Naive thymus-derived CD4-positive, alpha-beta T cell (primary cell): ENCODE measurements at regions of chr1 and their contacts with region 1.

Region 1: DNA sequence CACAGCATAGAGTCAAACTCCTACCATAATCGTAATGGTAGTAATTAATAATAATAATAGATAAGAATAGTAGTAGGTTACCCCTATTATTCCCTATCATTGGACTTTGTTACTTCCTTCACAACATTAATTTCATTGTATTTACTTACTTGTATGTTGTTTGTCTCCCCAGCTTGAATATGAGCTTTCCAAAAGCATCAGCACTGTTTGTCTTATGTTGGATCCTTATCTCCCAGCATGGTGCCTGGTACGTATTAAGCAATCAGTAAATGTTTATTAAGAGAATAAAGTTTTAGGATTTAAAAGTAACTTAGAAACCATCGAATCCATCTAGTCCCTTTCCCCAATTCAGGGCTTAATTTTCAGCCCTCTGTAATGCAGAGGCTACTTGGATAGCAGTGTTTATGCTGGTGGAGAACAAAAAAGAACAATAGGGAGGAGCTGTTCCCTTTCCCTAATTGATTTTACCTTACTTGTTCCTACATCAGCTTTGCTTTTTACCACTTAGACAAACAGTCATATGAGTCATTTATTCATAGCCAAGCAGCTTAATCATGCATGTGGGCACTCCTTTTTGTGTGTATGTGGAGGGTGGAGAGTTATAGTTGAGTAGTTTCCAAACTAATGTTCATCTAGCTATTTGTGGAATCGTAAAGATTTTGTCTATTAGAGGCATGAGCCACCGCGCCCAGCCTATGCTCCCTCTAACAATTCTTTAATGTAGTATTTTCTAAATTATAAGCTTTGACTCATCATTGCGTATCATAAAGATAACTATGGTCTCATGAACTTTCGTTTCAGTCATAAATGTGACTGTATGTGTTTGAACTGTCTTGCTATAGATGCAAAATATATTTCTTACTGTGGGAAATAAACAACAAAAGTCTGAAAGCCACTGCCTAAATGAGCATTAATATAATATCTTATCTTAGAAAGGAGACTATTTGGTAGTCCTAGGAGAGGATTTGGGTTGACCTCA is 20.9 kb upstream of the DR1 start:
- DNase-seq: no peak
- ATAC-seq: no peak
- H3K4me3 ChIP-seq: no peak overlapping the region
- H3K4me3 Mint-ChIP-seq: no peak overlapping the region
- H3K27ac ChIP-seq: no peak overlapping the region
- H3K27ac Mint-ChIP-seq: no peak overlapping the region
- H3K4me1 ChIP-seq: no peaks in the 10 kb centered on the region
- H3K4me1 Mint-ChIP-seq: no peaks in the 10 kb centered on the region
- H3K27me3 ChIP-seq: no peaks in the 10 kb centered on the region
- H3K27me3 Mint-ChIP-seq: no peaks in the 10 kb centered on the region

Region 2: GRCh38 chr1:93288558-93288957 is 36.2 kb before region 1 on chr1:
- CTCF ChIA-PET with region 1: no interaction called
- POLR2A ChIA-PET with region 1: no interaction called
- intact Hi-C with region 1: no loop called
- DNase-seq: no peak
- ATAC-seq: no peak
- H3K4me3 ChIP-seq: no peak overlapping the region
- H3K4me3 Mint-ChIP-seq: no peak overlapping the region
- H3K27ac ChIP-seq: no peak overlapping the region
- H3K27ac Mint-ChIP-seq: no peak overlapping the region
- H3K4me1 ChIP-seq: no peaks in the 10 kb centered on the region
- H3K4me1 Mint-ChIP-seq: peaks cover 0 to 5% (median 0%) of the 10 kb centered on the region in 7 donors
- H3K27me3 ChIP-seq: no peaks in the 10 kb centered on the region
- H3K27me3 Mint-ChIP-seq: no peaks in the 10 kb centered on the region

Region 3: GRCh38 chr1:93338421-93338820 is 13.6 kb after region 1 on chr1:
- CTCF ChIA-PET with region 1: no interaction called
- POLR2A ChIA-PET with region 1: interaction called, 4 read pairs
- intact Hi-C with region 1: loop called in 1 of 2 experiments (anchors 2 kb)
- DNase-seq: no peak
- ATAC-seq: no peak
- H3K4me3 ChIP-seq: no peak overlapping the region
- H3K4me3 Mint-ChIP-seq: no peak overlapping the region
- H3K27ac ChIP-seq: no peak overlapping the region
- H3K27ac Mint-ChIP-seq: peak overlapping the region in 2 of 9 donors; percentile 4 to 29
- H3K4me1 ChIP-seq: peaks cover 0 to 20% of the 10 kb centered on the region in 2 donors
- H3K4me1 Mint-ChIP-seq: peaks cover 11 to 41% (median 20%) of the 10 kb centered on the region in 7 donors
- H3K27me3 ChIP-seq: no peaks in the 10 kb centered on the region
- H3K27me3 Mint-ChIP-seq: no peaks in the 10 kb centered on the region